ENCODE measurements at regions of chr5 and their contacts with region 1.

Region 1: DNA sequence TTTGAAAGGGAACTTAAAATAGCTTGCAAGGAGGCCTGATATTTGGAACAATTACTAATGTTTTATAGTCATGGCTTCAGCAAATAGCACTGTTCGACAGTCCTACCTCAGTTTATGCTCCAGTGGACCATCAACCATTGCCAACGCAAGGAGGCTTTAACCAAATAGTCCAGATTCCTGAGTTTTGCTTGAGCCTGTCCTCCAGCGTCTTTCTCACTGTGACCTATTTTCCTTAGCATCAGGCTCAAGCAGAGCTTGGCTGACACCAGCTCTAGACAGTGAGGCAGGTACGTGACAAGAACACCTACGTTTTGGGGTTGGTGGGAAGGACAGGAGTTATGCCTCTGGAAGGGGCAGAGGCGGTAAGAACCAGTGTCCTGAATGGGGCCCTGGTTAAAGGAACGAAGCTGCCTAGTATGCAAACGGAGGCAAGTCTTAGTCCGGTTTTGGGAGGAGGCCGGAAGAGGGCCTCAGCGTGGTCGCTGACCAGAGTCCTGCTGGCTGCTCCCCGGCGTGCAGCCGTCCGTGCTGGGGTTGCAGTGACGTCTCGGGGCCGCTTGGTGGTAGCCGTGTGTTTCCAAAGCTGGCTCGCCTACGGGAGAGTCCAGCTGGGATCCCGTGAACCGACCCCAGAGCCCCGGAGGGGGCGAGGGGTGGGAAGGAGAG is 998 bp upstream of the FGF18 start:
- DNase-seq: peak; percentile 59
- H3K4me3 ChIP-seq: peak overlapping the region; percentile 46
- H3K27ac ChIP-seq: no peak overlapping the region
- H3K4me1 ChIP-seq: peaks cover 8% of the 10 kb centered on the region
- H3K27me3 ChIP-seq: peaks cover 7% of the 10 kb centered on the region
- CTCF ChIP-seq: peak; percentile 78

Region 2: DNA sequence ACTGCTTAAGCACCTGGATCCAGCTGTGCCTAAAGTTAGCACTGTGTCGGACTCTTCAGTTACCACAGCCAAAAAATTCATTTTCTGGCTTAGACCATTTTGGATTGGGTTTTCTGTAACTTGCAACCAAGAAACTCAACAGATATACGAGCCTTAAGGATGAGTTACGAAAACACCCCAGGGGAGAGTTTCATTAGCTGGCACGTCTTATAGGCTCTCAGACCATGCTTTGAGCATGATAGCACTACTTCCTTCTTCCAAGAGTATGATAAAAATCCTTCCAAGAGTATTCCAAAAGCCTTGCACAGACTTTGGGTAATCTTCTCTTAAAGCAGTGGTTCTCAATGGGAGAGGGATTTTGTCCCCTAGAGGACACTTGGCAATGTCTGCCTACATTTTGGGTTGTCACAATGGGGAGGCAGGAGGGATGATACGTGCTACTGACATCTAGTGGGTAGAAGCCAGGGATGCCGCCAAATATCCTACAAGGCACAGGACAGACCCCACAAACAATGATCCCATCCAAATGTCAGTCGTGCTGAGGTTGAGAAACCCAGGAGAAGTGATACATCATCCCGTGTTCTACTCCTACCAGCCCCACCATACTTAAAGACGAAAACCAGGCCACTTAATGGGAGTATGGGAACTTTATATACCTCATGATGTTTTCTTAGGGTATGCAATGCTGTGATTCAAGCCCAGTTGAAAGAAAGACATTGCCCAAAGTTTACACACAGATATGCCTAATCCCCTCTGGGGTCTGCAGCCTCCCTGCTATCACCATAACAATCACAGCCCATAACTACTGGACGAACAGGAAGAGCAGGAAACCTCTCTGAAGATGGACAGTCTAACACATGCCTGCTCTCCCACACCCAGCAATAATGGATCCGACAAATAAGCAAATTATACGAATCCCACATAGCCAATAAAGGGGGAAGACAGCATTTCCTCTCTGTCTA is 432.2 kb after region 1 on chr5:
- CTCF ChIA-PET with region 1: no interaction called
- POLR2A ChIA-PET with region 1: no interaction called
- intact Hi-C with region 1: loop called (anchors 5 kb)
- DNase-seq: peak; percentile 68
- H3K4me3 ChIP-seq: no peak overlapping the region
- H3K27ac ChIP-seq: no peak overlapping the region
- H3K4me1 ChIP-seq: no peaks in the 10 kb centered on the region
- H3K27me3 ChIP-seq: no peaks in the 10 kb centered on the region
- CTCF ChIP-seq: peak; percentile 58

Region 3: DNA sequence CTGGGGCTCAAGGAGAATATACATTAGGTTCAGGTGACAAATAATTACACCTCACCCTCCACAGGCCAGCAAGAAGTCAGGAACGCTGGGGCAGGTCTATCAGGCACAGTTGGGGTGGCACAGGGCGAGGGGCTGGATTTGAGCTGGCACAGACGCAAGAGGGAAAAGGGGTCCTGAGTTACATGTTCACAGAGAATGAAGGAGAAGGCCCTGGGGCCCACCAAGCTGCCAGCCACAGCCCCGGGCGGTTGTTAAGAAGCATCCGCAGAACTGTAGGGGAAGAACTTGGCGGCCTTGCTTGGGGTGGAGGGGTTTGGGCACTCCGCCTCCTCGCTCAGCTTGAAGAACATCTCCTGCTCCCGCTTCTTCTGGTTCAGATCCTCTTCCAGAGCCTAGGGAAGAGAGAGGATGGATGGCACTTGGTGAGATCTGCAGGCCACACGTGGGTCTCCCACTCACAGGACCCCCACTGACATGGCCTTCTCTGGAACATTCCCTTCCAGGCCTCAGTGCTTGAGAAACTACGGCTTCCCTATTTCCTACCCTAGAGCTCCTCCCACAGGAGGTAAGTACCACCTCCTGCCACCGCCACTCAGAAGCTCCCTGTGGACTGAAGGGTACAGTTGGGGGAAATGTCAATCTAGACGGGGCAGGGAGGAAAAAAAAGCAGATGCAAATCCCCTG is 626.3 kb after region 1 on chr5:
- CTCF ChIA-PET with region 1: no interaction called
- POLR2A ChIA-PET with region 1: no interaction called
- intact Hi-C with region 1: loop called (anchors 5 kb)
- DNase-seq: peak; percentile 53
- H3K4me3 ChIP-seq: no peak overlapping the region
- H3K27ac ChIP-seq: no peak overlapping the region
- H3K4me1 ChIP-seq: no peaks in the 10 kb centered on the region
- H3K27me3 ChIP-seq: no peaks in the 10 kb centered on the region
- CTCF ChIP-seq: 0 out of 2 replicates have a peak, but pooled peaks have one; percentile 25

Region 4: DNA sequence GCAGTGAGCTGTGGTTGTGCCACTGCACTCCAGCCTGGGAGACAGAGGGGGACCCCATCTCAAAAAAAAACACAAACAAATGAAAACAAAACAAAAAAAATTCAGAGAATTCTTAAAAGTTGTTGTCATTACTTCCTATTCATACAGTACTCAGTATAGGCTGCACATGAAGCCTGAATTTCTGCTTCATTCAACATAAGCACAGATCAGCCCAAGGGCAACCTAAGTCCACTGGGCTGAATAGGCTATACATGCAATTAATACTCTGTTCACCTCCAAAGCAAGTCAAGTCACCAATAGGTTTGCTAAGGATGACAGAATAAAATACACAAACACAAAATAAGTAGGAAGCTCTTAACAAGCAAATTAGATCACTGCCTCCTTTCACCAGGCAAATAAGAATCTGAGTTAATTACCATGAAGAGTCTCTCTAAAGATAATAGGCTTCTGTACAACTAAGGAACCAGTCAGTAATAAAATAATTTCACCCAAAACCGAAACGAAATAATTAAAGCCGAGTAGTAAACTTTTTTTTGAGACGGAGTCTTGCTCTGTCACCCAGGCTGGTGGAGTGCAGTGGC is 846.5 kb after region 1 on chr5:
- CTCF ChIA-PET with region 1: no interaction called
- POLR2A ChIA-PET with region 1: no interaction called
- intact Hi-C with region 1: no loop called
- DNase-seq: no peak
- H3K4me3 ChIP-seq: no peak overlapping the region
- H3K27ac ChIP-seq: no peak overlapping the region
- H3K4me1 ChIP-seq: peaks cover 4% of the 10 kb centered on the region
- H3K27me3 ChIP-seq: no peaks in the 10 kb centered on the region
- CTCF ChIP-seq: no peak

Measured in A673 (cell line).